WTC11 (cell line): ENCODE measurements at regions of chr1 and their contacts with region 1.

Region 1: GRCh38 chr1:26035959-26036755 is 9.8 kb downstream of the SLC30A2 start:
- DNase-seq: peak; percentile 86
- ATAC-seq: peak; percentile 78
- H3K4me3 Mint-ChIP-seq: peak overlapping the region; percentile 94
- H3K27ac Mint-ChIP-seq: no peak overlapping the region
- H3K4me1 Mint-ChIP-seq: peaks cover 8% of the 10 kb centered on the region
- H3K27me3 Mint-ChIP-seq: peaks cover 54% of the 10 kb centered on the region
- CTCF ChIP-seq: peak; percentile 100

Region 2: DNA sequence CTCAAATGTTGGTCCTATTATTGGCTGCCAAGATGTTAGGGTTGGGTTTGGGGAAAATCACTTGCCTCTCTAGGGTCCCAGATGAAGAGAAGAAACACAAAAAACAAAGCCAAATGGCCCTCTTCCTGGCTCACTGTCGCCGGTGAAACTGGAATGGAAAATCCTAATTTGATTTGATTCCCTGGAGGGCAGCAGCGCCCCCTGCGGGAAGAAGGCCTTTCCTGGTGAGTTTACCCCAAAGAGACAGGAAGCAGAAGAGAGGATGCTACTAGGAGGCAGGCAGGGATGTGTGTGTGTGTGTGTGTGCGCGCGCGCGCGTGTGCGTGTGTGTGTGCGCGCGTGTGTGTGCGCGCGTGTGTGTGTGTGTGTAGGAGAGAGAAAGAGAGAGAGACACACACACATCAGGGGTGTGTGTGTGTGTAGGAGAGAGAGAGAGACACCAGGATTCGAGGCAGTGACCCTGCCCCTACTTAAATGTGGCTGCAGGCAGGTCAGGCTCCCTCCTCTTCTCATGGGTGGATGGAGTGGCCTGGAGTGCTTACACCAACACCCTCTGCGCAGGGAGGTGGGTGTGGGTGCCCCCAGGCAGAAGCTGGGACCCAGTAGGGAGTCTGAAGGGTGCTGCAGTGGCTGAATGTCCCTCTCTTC is 239.2 kb before region 1 on chr1:
- CTCF ChIA-PET with region 1: no interaction called
- POLR2A ChIA-PET with region 1: no interaction called
- DNase-seq: peak; percentile 95
- ATAC-seq: peak; percentile 27
- H3K4me3 Mint-ChIP-seq: no peak overlapping the region; the same call in 1 of the 2 replicates
- H3K27ac Mint-ChIP-seq: peak overlapping the region; percentile 29; the same call in 1 of the 2 replicates
- H3K4me1 Mint-ChIP-seq: peaks cover 30% of the 10 kb centered on the region
- H3K27me3 Mint-ChIP-seq: peaks cover 4% of the 10 kb centered on the region
- CTCF ChIP-seq: peak; percentile 77

Region 3: GRCh38 chr1:25874934-25875855 is 161.0 kb before region 1 on chr1 and contains the start of gene PAQR7:
- CTCF ChIA-PET with region 1: interaction called, 13 read pairs
- POLR2A ChIA-PET with region 1: no interaction called
- DNase-seq: peak; percentile 80
- ATAC-seq: peak; percentile 56
- H3K4me3 Mint-ChIP-seq: peak within 1 kb of the TSS; percentile 77
- H3K27ac Mint-ChIP-seq: peak within 1 kb of the TSS; percentile 80
- H3K4me1 Mint-ChIP-seq: peaks cover 24% of the 10 kb centered on the region
- H3K27me3 Mint-ChIP-seq: peaks cover 19% of the 10 kb centered on the region
- CTCF ChIP-seq: no peak
- total RNA-seq, gene PAQR7: 6.7 to 9.1 TPM (median 8.4 TPM) in 3 replicates

Region 4: GRCh38 chr1:26021647-26022403 is 14.3 kb before region 1 on chr1 and contains the start of gene EXTL1:
- CTCF ChIA-PET with region 1: interaction called, 12 read pairs
- POLR2A ChIA-PET with region 1: no interaction called
- DNase-seq: peak; percentile 75
- ATAC-seq: peak; percentile 94
- H3K4me3 Mint-ChIP-seq: peak within 1 kb of the TSS; percentile 92
- H3K27ac Mint-ChIP-seq: peak within 1 kb of the TSS; percentile 95
- H3K4me1 Mint-ChIP-seq: peaks cover 25% of the 10 kb centered on the region
- H3K27me3 Mint-ChIP-seq: no peaks in the 10 kb centered on the region; the same call in 1 of the 2 replicates
- CTCF ChIP-seq: no peak
- total RNA-seq, gene EXTL1: 1.3 to 2.1 TPM (median 1.9 TPM) in 3 replicates

Region 5: DNA sequence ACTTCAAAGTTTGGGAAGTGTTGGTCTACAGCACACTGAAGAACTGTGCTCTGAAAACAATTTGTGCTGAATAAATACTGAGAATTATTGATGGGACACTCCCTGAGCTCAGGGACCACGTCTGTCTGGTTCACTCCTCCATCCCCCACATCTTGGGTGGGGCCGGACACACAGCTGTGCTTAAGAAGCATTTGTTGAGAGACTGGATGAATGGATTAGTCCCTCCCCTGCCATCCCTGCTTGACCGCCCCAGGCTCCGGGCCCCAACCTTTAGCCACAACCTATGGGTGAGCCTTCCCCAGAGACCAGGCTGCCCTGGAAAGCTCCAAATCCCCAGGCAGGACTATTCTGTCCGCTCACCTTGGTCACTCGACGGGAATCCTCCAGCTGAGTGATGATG is 23.7 kb after region 1 on chr1:
- CTCF ChIA-PET with region 1: interaction called, 27 read pairs
- POLR2A ChIA-PET with region 1: no interaction called
- DNase-seq: no peak
- ATAC-seq: no peak
- H3K4me3 Mint-ChIP-seq: no peak overlapping the region
- H3K27ac Mint-ChIP-seq: no peak overlapping the region
- H3K4me1 Mint-ChIP-seq: no peaks in the 10 kb centered on the region
- H3K27me3 Mint-ChIP-seq: peaks cover 7% of the 10 kb centered on the region
- CTCF ChIP-seq: no peak

Region 6: GRCh38 chr1:26102526-26102925 is 66.4 kb after region 1 on chr1:
- CTCF ChIA-PET with region 1: interaction called, 35 read pairs
- POLR2A ChIA-PET with region 1: no interaction called
- DNase-seq: no peak
- ATAC-seq: no peak
- H3K4me3 Mint-ChIP-seq: no peak overlapping the region
- H3K27ac Mint-ChIP-seq: no peak overlapping the region
- H3K4me1 Mint-ChIP-seq: peaks cover 4% of the 10 kb centered on the region; the same call in 1 of the 2 replicates
- H3K27me3 Mint-ChIP-seq: peaks cover 7% of the 10 kb centered on the region; the same call in 1 of the 2 replicates
- CTCF ChIP-seq: no peak

Region 7: GRCh38 chr1:26190373-26190987 is 154.3 kb after region 1 on chr1 and contains the start of gene CATSPER4:
- CTCF ChIA-PET with region 1: interaction called, 12 read pairs
- POLR2A ChIA-PET with region 1: no interaction called
- DNase-seq: peak; percentile 79
- ATAC-seq: peak; percentile 97
- H3K4me3 Mint-ChIP-seq: no peak within 1 kb of the TSS
- H3K27ac Mint-ChIP-seq: peak within 1 kb of the TSS; percentile 55; the same call in 1 of the 2 replicates
- H3K4me1 Mint-ChIP-seq: peaks cover 17% of the 10 kb centered on the region
- H3K27me3 Mint-ChIP-seq: no peaks in the 10 kb centered on the region; the same call in 1 of the 2 replicates
- CTCF ChIP-seq: 0 out of 2 replicates have a peak, but pooled peaks have one; percentile 20
- total RNA-seq, gene CATSPER4: 0.35 to 0.85 TPM (median 0.55 TPM) in 3 replicates

Region 8: GRCh38 chr1:26218906-26219494 is 182.8 kb after region 1 on chr1:
- CTCF ChIA-PET with region 1: no interaction called
- POLR2A ChIA-PET with region 1: no interaction called
- DNase-seq: no peak
- ATAC-seq: no peak
- H3K4me3 Mint-ChIP-seq: no peak overlapping the region
- H3K27ac Mint-ChIP-seq: no peak overlapping the region
- H3K4me1 Mint-ChIP-seq: peaks cover 6% of the 10 kb centered on the region
- H3K27me3 Mint-ChIP-seq: peaks cover 4% of the 10 kb centered on the region
- CTCF ChIP-seq: no peak

Region 9: GRCh38 chr1:26449868-26450267 is 413.7 kb after region 1 on chr1:
- CTCF ChIA-PET with region 1: no interaction called
- POLR2A ChIA-PET with region 1: no interaction called
- DNase-seq: no peak
- ATAC-seq: no peak
- H3K4me3 Mint-ChIP-seq: no peak overlapping the region
- H3K27ac Mint-ChIP-seq: no peak overlapping the region
- H3K4me1 Mint-ChIP-seq: peaks cover 5% of the 10 kb centered on the region
- H3K27me3 Mint-ChIP-seq: no peaks in the 10 kb centered on the region
- CTCF ChIP-seq: no peak